Esophagus muscularis mucosa (tissue), 4 donors: ENCODE measurements at regions of chr15 and their contacts with region 1.

Region 1: DNA sequence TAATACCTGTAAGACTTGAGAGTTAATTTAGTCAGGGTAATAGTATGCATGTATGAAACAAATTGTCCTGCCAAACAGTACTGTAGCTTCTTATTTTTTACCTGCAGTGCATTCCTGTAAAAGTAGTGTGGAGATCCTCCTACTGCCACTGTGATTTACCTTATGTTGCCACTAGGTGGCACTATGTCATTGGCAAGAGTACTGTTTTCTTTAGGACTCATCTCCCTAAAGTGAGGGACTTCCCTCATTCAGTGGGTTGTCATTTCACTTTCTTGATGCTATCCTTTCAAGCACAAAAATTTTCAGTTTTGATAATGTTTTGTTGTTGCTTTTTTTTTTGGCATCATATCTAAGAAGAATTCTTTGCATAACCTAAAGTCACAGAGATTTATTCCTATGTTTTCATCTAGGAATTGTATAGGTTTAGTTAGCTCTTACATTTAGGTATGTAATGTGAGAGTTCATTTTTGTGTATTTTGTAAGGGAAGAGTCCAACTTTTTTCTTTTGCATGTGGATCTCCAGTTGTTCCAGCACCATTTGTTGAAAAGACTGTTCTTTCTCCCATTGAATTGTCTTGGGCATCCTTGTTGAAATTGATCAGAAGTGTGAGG is 105.7 kb downstream of the AKAP13 start:
- DNase-seq: no peak
- H3K4me3 ChIP-seq: no peak overlapping the region
- H3K27ac ChIP-seq: peak overlapping the region in 3 of 4 donors; percentile 36 to 68 (median 63)
- H3K4me1 ChIP-seq: peaks cover 33 to 97% (median 84%) of the 10 kb centered on the region in 4 donors
- H3K27me3 ChIP-seq: no peaks in the 10 kb centered on the region
- CTCF ChIP-seq: peak; percentile 56 to 93 (median 83)
- EP300 ChIP-seq: no peak
- POLR2A ChIP-seq: no peak

Region 2: GRCh38 chr15:85582131-85583079 is 96.3 kb after region 1 on chr15:
- intact Hi-C with region 1: loop called (anchors 10 kb)
- DNase-seq: no peak
- H3K4me3 ChIP-seq: peak overlapping the region; percentile 45 to 55 (median 48)
- H3K27ac ChIP-seq: peak overlapping the region; percentile 83 to 89 (median 84)
- H3K4me1 ChIP-seq: peaks cover 63 to 89% (median 82%) of the 10 kb centered on the region in 4 donors
- H3K27me3 ChIP-seq: no peaks in the 10 kb centered on the region
- CTCF ChIP-seq: no peak
- EP300 ChIP-seq: no peak
- POLR2A ChIP-seq: peak; percentile 47

Region 3: GRCh38 chr15:85597155-85597815 is 111.2 kb after region 1 on chr15:
- intact Hi-C with region 1: no loop called
- DNase-seq: no peak
- H3K4me3 ChIP-seq: no peak overlapping the region
- H3K27ac ChIP-seq: peak overlapping the region in 3 of 4 donors; percentile 0 to 56 (median 45)
- H3K4me1 ChIP-seq: peaks cover 49 to 70% (median 67%) of the 10 kb centered on the region in 4 donors
- H3K27me3 ChIP-seq: no peaks in the 10 kb centered on the region
- CTCF ChIP-seq: no peak
- EP300 ChIP-seq: no peak
- POLR2A ChIP-seq: no peak

Region 4: GRCh38 chr15:85646538-85647091 is 160.6 kb after region 1 on chr15:
- intact Hi-C with region 1: loop called (anchors 10 kb)
- DNase-seq: no peak
- H3K4me3 ChIP-seq: no peak overlapping the region
- H3K27ac ChIP-seq: peak overlapping the region; percentile 18 to 91 (median 52)
- H3K4me1 ChIP-seq: peaks cover 46 to 87% (median 80%) of the 10 kb centered on the region in 4 donors
- H3K27me3 ChIP-seq: no peaks in the 10 kb centered on the region
- CTCF ChIP-seq: no peak
- EP300 ChIP-seq: no peak
- POLR2A ChIP-seq: no peak

Region 5: GRCh38 chr15:85730001-85730820 is 244.1 kb after region 1 on chr15:
- intact Hi-C with region 1: loop called (anchors 10 kb)
- DNase-seq: no peak
- H3K4me3 ChIP-seq: no peak overlapping the region
- H3K27ac ChIP-seq: peak overlapping the region; percentile 82 to 88 (median 86)
- H3K4me1 ChIP-seq: peaks cover 24 to 55% (median 53%) of the 10 kb centered on the region in 4 donors
- H3K27me3 ChIP-seq: no peaks in the 10 kb centered on the region
- CTCF ChIP-seq: peak; percentile 77 to 83 (median 81)
- EP300 ChIP-seq: no peak
- POLR2A ChIP-seq: no peak